Activated CD4-positive, alpha-beta memory T cell treated with anti-CD3 and anti-CD28 coated beads for 36 hours (primary cell): ENCODE measurements at regions of chr15 and their contacts with region 1.

Region 1: GRCh38 chr15:55407949-55408791 is at the starts of genes CCPG1 and PIERCE2:
- DNase-seq: peak; percentile 93
- H3K4me3 Mint-ChIP-seq: peak within 1 kb of the TSS; percentile 87
- H3K27ac Mint-ChIP-seq: peak within 1 kb of the TSS; percentile 80
- H3K4me1 Mint-ChIP-seq: peaks cover 22% of the 10 kb centered on the region
- H3K27me3 Mint-ChIP-seq: no peaks in the 10 kb centered on the region
- total RNA-seq, gene CCPG1: 14.4 to 16.5 TPM
- total RNA-seq, gene PIERCE2: 0.34 TPM in 1 of 2 experiments, not detected in the other

Region 2: GRCh38 chr15:55196458-55197361 is 211.5 kb before region 1 on chr15 and contains the start of gene RSL24D1:
- CTCF ChIA-PET with region 1: interaction called, 4 read pairs
- POLR2A ChIA-PET with region 1: interaction called, 10 read pairs
- intact Hi-C with region 1: loop called (anchors 1 kb)
- DNase-seq: peak; percentile 98
- H3K4me3 Mint-ChIP-seq: no peak within 1 kb of the TSS
- H3K27ac Mint-ChIP-seq: no peak within 1 kb of the TSS
- H3K4me1 Mint-ChIP-seq: peaks cover 22% of the 10 kb centered on the region
- H3K27me3 Mint-ChIP-seq: no peaks in the 10 kb centered on the region
- total RNA-seq, gene RSL24D1: 157 to 163 TPM

Region 3: GRCh38 chr15:55241891-55242290 is 166.3 kb before region 1 on chr15:
- CTCF ChIA-PET with region 1: no interaction called
- POLR2A ChIA-PET with region 1: no interaction called
- intact Hi-C with region 1: loop called (anchors 5 kb)
- DNase-seq: no peak
- H3K4me3 Mint-ChIP-seq: peak overlapping the region; percentile 1
- H3K27ac Mint-ChIP-seq: peak overlapping the region; percentile 79
- H3K4me1 Mint-ChIP-seq: peaks cover 86% of the 10 kb centered on the region
- H3K27me3 Mint-ChIP-seq: no peaks in the 10 kb centered on the region

Region 4: DNA sequence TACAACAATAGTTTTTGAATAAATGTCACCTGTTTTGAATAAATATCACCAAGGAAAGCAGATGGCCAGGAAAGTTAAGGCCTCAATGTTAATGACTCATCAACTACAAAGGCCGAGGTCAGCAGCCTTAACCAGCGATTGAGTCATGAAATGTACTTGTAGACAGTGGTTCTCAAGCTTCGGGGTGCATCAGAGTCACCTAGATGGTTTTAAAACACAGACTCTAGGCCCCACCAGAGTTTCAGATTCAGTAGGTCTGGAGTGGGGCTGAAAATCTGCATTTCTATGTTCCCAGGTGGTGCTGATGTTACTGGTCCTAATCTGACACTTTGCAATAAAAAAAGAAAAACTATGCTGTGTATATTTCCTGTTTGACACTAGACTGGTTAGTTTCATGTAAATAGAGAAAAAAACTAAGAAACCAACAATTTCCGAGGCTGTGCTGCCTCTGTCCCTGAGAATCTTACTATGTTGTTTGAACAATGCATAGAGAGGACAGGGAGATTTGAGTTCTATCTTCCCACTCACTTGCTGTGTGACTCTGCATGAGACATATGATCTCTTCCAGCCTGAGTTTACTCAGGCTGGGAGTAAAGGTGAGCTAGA is 128.3 kb before region 1 on chr15:
- CTCF ChIA-PET with region 1: no interaction called
- POLR2A ChIA-PET with region 1: interaction called, 4 read pairs
- intact Hi-C with region 1: loop called (anchors 2 kb)
- DNase-seq: peak; percentile 78
- H3K4me3 Mint-ChIP-seq: peak overlapping the region; percentile 34
- H3K27ac Mint-ChIP-seq: peak overlapping the region; percentile 98
- H3K4me1 Mint-ChIP-seq: peaks cover 93% of the 10 kb centered on the region
- H3K27me3 Mint-ChIP-seq: no peaks in the 10 kb centered on the region

Region 5: GRCh38 chr15:55318588-55319494 is 89.3 kb before region 1 on chr15 and contains the starts of genes PIGB and PIGBOS1:
- CTCF ChIA-PET with region 1: interaction called, 8 read pairs
- POLR2A ChIA-PET with region 1: interaction called, 10 read pairs
- intact Hi-C with region 1: loop called (anchors 1 kb)
- DNase-seq: peak; percentile 87
- H3K4me3 Mint-ChIP-seq: peak within 1 kb of the TSS; percentile 97
- H3K27ac Mint-ChIP-seq: peak within 1 kb of the TSS; percentile 98
- H3K4me1 Mint-ChIP-seq: peaks cover 48% of the 10 kb centered on the region
- H3K27me3 Mint-ChIP-seq: no peaks in the 10 kb centered on the region
- total RNA-seq, gene PIGB: 18.0 to 18.9 TPM
- total RNA-seq, gene PIGBOS1: 10.5 to 11.1 TPM

Region 6: DNA sequence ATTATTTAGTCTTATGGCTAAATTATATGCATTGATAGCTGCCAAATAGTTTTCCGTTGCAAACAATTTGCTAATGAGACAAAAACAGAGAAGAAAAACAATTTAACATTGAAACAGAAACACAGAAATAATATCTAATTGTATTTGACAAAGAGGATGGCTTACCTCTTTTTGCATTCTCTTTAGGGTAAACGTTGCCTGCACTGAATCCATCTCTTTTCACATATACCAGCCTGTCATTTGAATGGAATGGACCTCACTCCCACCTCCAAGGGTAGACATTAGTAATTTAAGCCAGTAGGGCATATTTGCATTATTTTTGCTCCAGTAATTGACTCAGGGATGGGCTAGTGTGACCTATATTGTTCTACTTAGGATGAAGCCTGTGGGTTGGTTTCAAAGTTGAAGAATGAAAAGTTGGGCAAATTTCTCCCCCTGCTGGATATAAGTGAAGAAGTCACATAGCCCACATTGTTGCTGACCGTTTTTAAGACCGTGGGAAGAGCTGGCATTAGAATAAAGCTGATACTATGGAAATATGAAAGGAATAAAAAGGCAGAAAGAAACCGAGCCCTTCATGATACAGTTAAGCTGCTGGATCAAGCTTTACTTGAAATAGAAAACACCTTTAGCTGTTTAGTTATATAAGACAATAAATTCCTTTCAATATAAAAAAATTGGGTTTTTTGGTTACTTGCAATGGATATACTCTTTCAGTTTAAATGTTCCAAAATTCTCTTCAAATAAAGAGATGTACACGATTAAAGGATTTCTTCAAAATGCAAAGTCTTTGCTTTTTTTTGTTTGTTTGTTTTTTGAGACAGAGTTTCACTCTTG is 27.0 kb after region 1 on chr15:
- CTCF ChIA-PET with region 1: interaction called, 22 read pairs
- POLR2A ChIA-PET with region 1: no interaction called
- intact Hi-C with region 1: loop called (anchors 1 kb)
- DNase-seq: no peak
- H3K4me3 Mint-ChIP-seq: no peak overlapping the region
- H3K27ac Mint-ChIP-seq: no peak overlapping the region
- H3K4me1 Mint-ChIP-seq: peaks cover 6% of the 10 kb centered on the region
- H3K27me3 Mint-ChIP-seq: peaks cover 1% of the 10 kb centered on the region

Region 7: DNA sequence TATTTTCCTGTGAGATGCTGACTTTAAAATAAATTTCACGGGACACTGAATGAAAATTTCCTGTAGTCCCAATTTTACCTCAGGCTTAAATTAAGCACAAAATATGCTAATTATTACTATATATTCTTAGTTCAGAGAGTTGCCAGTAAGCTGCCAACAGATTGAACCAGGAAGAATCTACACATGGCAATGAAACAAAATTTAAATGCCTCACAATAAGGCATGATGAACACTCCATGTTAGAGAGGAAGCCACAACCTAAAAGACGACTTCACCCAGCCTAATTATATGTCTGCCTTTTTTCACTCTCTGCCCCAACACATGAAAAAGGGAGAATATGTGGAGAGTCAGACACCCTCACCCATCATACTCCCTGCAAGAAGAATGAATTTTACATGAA is 60.2 kb after region 1 on chr15:
- CTCF ChIA-PET with region 1: no interaction called
- POLR2A ChIA-PET with region 1: no interaction called
- intact Hi-C with region 1: no loop called
- DNase-seq: no peak
- H3K4me3 Mint-ChIP-seq: no peak overlapping the region
- H3K27ac Mint-ChIP-seq: no peak overlapping the region
- H3K4me1 Mint-ChIP-seq: no peaks in the 10 kb centered on the region
- H3K27me3 Mint-ChIP-seq: peaks cover 2% of the 10 kb centered on the region

Region 8: GRCh38 chr15:55799291-55800212 is 391.4 kb after region 1 on chr15:
- CTCF ChIA-PET with region 1: no interaction called
- POLR2A ChIA-PET with region 1: no interaction called
- intact Hi-C with region 1: no loop called
- DNase-seq: peak; percentile 48
- H3K4me3 Mint-ChIP-seq: no peak overlapping the region
- H3K27ac Mint-ChIP-seq: no peak overlapping the region
- H3K4me1 Mint-ChIP-seq: peaks cover 2% of the 10 kb centered on the region
- H3K27me3 Mint-ChIP-seq: peaks cover 16% of the 10 kb centered on the region

Region 9: GRCh38 chr15:56040081-56041035 is 632.2 kb after region 1 on chr15:
- CTCF ChIA-PET with region 1: no interaction called
- POLR2A ChIA-PET with region 1: no interaction called
- intact Hi-C with region 1: loop called (anchors 10 kb)
- DNase-seq: peak; percentile 44
- H3K4me3 Mint-ChIP-seq: no peak overlapping the region
- H3K27ac Mint-ChIP-seq: peak overlapping the region; percentile 64
- H3K4me1 Mint-ChIP-seq: peaks cover 55% of the 10 kb centered on the region
- H3K27me3 Mint-ChIP-seq: no peaks in the 10 kb centered on the region